Activated naive CD4-positive, alpha-beta T cell treated with anti-CD3 and anti-CD28 coated beads for 36 hours (primary cell): ENCODE measurements at regions of chr6 and their contacts with region 1.

Region 1: GRCh38 chr6:37257634-37258404 is at the starts of genes TBC1D22B and TMEM217:
- DNase-seq: peak; percentile 99
- H3K4me3 Mint-ChIP-seq: peak within 1 kb of the TSS; percentile 80
- H3K27ac Mint-ChIP-seq: peak within 1 kb of the TSS; percentile 87
- H3K4me1 Mint-ChIP-seq: peaks cover 46% of the 10 kb centered on the region
- H3K27me3 Mint-ChIP-seq: no peaks in the 10 kb centered on the region
- total RNA-seq, gene TBC1D22B: 13.4 to 15.1 TPM
- total RNA-seq, gene TMEM217: 0.81 to 0.95 TPM

Region 2: DNA sequence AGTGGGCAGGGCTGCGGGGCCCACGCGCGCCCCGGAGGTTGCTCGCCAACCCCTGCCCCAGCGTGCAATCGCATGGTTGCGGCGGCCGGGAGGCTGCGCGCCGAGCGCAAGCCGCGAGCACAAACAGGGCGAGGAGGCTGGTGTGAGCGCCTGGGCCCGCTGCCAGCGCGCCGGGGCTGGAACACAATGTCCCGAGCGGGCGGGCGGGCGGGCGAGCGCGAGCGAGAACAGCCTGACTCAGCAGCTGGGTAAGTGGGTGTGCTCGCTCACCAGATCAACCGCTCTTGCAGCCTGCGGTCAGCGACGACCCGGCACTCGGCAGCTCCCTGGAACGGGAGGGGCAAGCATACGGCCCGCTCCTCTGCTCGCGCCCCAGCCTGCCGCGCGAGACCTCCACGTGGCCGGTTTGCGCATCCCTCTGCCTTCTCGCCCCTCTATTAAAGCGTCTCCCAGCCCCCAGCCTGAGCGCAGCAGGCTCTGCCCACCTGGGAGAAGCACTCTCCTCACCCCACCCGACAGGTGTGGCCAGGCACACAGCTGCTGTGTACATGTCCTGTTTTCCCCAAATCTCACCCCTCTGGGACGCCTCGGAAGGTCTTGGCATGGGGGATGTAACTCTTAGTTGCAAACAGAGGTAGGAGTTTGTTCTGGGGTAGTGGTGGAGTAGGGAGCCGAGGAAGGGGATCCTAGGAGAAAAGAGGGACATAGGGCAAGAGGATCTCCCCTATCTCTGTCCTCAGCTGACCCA is 1529.7 kb before region 1 on chr6:
- CTCF ChIA-PET with region 1: no interaction called
- intact Hi-C with region 1: no loop called
- DNase-seq: peak; percentile 89
- H3K4me3 Mint-ChIP-seq: peak overlapping the region; percentile 61
- H3K27ac Mint-ChIP-seq: peak overlapping the region; percentile 91
- H3K4me1 Mint-ChIP-seq: peaks cover 81% of the 10 kb centered on the region
- H3K27me3 Mint-ChIP-seq: no peaks in the 10 kb centered on the region

Region 3: GRCh38 chr6:36912586-36912985 is 345.2 kb before region 1 on chr6:
- CTCF ChIA-PET with region 1: no interaction called
- intact Hi-C with region 1: loop called (anchors 2 kb)
- DNase-seq: peak; percentile 72
- H3K4me3 Mint-ChIP-seq: peak overlapping the region; percentile 5
- H3K27ac Mint-ChIP-seq: peak overlapping the region; percentile 71
- H3K4me1 Mint-ChIP-seq: peaks cover 40% of the 10 kb centered on the region
- H3K27me3 Mint-ChIP-seq: no peaks in the 10 kb centered on the region

Region 4: DNA sequence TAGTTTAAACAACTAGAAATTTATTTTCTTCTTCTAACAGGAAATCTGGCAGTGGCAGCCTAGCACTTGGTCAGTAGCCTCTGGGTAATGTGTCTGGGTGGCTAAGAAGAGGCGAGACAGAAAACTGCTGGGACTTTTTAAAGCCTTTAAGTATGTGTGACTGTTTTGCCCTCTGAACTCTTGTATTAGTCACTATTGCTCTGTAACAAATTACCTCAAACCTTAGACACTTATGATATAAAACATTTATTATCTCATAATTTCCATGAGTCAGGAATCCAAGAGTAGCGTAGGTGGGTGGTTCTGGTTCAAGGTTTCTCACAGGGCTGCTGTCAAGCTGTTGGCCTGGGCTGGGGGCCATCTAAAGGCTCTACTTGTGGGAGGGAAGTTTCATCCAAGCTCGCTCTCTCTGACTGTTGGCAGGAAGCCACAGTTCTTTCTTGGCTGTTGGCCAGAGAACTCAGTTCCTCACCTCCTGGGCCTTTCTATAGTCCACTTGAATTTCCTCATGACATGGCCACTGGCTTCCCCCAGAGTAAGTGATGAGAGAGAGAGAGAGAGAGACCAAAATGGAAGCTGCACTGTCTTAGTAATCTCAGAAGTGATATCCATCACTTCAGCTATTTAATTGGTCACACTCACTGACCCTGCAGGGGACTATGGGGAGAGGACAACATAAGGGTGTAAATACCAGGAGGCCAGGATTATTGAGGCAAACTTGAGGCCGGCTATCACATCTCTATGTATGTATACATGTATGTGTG is 17.7 kb before region 1 on chr6:
- CTCF ChIA-PET with region 1: interaction called, 4 read pairs
- intact Hi-C with region 1: loop called (anchors 1 kb)
- DNase-seq: peak; percentile 93
- H3K4me3 Mint-ChIP-seq: no peak overlapping the region
- H3K27ac Mint-ChIP-seq: peak overlapping the region; percentile 83
- H3K4me1 Mint-ChIP-seq: peaks cover 39% of the 10 kb centered on the region
- H3K27me3 Mint-ChIP-seq: no peaks in the 10 kb centered on the region

Region 5: DNA sequence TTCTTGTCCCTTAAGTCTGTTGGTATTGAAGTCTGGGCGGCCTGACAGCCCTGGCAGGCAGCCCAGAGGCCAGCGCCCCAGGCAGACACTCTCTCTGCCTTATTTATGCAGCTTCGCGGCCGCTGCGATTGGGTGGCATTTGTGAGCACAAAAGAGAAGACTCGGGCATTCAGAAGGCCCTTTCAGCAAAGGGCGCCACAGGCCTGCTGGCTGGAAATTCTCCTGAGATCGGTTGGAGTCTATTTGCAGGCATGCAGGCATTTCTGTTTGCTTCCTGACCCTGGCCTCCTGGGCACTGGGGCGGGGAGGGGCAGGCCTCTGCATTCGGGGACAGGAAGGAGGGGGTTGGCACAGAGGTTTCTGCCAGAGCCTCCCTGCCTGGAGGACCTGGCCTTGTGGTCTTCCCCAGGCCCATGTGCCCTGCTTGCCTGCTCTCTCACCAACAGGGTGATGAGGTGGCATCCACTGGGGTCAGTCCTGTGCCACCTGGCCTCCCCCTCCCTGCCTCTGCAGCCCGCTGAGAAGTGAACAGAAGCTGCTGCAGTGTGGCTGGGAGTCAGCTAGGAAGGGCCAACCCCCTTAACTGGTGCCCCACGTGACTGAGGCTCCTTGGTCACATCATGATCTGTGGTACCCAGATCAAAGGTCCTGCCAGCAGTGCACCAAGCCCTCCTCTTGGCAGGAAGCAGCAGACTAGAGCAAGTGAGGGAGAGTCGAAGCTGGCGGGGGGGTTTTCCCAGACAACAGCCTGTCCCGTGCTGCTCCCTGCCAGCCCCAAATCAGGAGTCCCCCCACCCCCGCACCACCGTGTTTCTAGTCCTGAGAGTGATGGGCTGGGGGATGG is 258.5 kb after region 1 on chr6:
- CTCF ChIA-PET with region 1: no interaction called
- intact Hi-C with region 1: loop called (anchors 5 kb)
- DNase-seq: peak; percentile 98
- H3K4me3 Mint-ChIP-seq: peak overlapping the region; percentile 72
- H3K27ac Mint-ChIP-seq: peak overlapping the region; percentile 97
- H3K4me1 Mint-ChIP-seq: peaks cover 82% of the 10 kb centered on the region
- H3K27me3 Mint-ChIP-seq: no peaks in the 10 kb centered on the region